ENCODE measurements at regions of chr14 and their contacts with region 1.

Region 1: DNA sequence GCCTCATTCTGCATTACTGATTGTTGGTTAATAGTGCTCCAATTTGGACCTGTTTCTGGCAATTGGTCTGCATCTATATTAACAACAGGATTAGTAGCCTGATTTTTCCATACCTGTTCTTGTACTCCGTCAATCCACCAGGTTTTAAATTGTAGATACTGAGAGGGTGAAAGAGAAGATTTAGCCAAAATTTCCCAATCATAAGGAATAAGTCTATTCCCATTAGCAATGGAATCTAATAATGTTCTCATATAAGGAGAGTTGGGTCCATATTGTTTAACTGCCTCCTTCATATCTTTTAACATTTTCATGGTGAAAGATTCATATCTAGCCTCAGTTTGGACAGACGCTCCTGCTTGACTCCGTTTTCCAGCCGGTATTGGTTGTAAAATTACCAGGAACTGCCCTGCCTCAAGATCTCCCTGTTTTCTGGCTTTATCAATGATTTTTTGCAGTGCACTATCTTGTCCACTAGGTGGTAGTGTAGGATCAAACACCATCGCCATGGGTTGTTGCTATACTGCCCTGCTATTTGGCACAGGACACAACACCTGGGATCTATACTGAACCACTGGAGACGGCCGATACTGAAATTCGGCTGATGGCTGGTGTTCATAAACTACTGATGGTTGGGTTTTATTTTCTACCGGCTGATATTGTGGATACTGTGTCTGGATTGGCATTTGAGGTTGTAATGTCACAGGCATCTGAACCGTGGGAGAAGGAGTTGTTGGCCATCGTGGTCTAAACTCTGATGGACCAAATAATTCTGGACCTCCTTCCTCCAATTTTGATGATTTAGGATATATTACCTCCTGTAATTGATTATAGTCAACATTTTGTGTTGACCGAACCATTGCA is 25.2 kb downstream of the DHRS4L2 start:
- DNase-seq: peak; percentile 53
- H3K4me3 Mint-ChIP-seq: no peak overlapping the region
- H3K27ac Mint-ChIP-seq: no peak overlapping the region
- H3K4me1 Mint-ChIP-seq: peaks cover 24% of the 10 kb centered on the region
- H3K27me3 Mint-ChIP-seq: peaks cover 6% of the 10 kb centered on the region

Region 2: GRCh38 chr14:24036169-24036962 is 22.5 kb after region 1 on chr14:
- CTCF ChIA-PET with region 1: interaction called, 3 read pairs
- POLR2A ChIA-PET with region 1: no interaction called
- intact Hi-C with region 1: loop called (anchors 1 kb)
- DNase-seq: peak; percentile 77
- H3K4me3 Mint-ChIP-seq: peak overlapping the region; percentile 90
- H3K27ac Mint-ChIP-seq: peak overlapping the region; percentile 74
- H3K4me1 Mint-ChIP-seq: peaks cover 9% of the 10 kb centered on the region
- H3K27me3 Mint-ChIP-seq: no peaks in the 10 kb centered on the region

Measured in activated CD4-positive, alpha-beta memory T cell treated with anti-CD3 and anti-CD28 coated beads for 36 hours (primary cell).